ENCODE measurements at regions of chr14 and their contacts with region 1.

Region 1: DNA sequence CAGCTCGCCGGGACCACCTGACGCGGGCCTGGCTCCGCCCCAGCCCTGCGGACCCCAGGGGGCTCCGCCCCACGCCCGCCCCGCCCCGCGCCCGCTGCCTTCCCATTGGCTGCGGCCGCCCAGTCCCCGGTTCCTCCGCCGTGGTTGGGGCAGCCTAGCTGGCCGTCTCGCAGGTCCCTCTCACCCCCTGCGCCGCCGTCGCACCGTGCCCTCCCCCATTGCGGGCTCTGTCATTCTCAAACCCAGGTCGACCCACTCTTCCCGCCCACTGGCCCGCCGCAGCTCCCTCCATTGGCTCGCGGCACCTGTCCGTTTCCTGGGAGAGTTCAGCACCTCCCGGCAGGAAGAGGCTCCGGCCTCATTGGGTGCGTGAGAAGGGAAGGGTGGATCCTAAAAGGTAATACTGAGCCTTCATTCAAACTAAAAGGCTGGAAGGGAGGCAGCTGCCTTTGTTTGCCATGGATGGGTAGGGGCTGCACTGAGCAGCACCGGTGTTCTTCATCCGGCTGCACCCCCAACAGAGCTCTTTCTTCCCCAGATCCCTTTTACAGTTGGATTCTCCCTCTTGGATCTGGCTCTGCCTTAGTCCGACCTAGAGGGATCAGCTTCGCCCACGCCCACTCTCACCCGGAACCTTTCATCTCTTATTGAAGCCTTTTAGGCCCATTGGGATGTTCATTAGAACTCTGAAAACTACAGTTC is 381 bp upstream of the MAP3K9 start:
- DNase-seq: peak; percentile 94
- H3K4me3 ChIP-seq: peak overlapping the region; percentile 77
- H3K27ac ChIP-seq: peak overlapping the region; percentile 28
- H3K4me1 ChIP-seq: peaks cover 35% of the 10 kb centered on the region
- CTCF ChIP-seq: no peak

Region 2: DNA sequence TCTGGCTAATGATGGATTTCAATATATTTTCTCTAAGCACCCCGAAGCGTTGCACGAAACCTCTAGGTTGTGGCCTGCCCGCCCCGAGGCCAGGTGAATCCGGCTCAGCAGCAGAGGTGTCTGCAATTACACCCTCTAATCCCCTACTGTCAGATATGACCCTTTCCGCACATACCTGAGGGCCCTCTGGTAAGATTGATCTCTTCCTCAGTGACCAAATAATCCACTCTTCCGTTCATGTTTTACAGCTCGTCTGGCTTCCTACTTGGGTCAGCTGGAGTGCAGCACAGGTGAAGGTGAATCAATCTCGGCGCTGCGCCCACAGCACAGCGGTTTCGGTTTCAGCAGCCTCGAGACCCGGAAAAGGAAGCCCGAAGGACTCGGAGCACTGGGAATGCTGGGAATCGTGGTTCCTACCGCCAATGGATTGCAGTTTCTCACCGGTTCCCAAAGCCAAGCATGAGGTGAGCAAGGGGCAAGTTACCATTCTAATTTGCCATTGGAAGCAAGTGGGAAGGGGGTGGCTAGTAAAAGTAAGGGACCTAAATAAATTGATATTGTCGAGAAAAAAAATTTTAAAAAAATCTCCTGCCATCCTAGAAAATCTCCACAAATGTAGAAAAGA is 392.9 kb before region 1 on chr14 and contains the start of gene SYNJ2BP:
- CTCF ChIA-PET with region 1: no interaction called
- POLR2A ChIA-PET with region 1: no interaction called
- intact Hi-C with region 1: loop called (anchors 10 kb)
- DNase-seq: peak; percentile 66
- H3K4me3 ChIP-seq: peak within 1 kb of the TSS; percentile 83
- H3K27ac ChIP-seq: no peak within 1 kb of the TSS
- H3K4me1 ChIP-seq: peaks cover 10% of the 10 kb centered on the region
- CTCF ChIP-seq: no peak
- total RNA-seq, gene SYNJ2BP: 6.2 and 6.4 TPM in 2 replicates

Region 3: DNA sequence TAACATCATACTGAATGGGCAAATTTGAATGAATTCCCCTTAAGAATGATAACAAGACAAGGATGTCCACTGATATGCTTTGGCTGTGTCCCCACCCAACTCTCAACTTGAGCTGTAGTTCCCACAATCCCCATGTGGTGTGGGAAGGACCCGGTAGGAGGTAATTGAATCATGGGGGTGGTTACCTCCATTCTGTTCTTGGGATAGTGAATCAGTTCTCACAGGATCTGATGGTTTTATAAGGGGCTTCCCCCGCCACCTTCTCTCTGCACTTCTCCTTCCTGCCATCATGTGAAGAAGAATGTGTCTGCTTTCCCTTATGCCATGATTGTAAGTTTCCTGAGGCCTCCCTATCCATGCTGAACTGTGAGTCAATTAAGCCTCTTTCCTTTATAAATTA is 238.6 kb before region 1 on chr14:
- CTCF ChIA-PET with region 1: no interaction called
- POLR2A ChIA-PET with region 1: no interaction called
- intact Hi-C with region 1: no loop called
- DNase-seq: no peak
- H3K4me3 ChIP-seq: no peak overlapping the region
- H3K27ac ChIP-seq: no peak overlapping the region
- H3K4me1 ChIP-seq: no peaks in the 10 kb centered on the region
- CTCF ChIP-seq: no peak

Region 4: GRCh38 chr14:70972107-70972976 is 162.6 kb after region 1 on chr14:
- CTCF ChIA-PET with region 1: interaction called, 11 read pairs
- POLR2A ChIA-PET with region 1: no interaction called
- intact Hi-C with region 1: no loop called
- DNase-seq: peak; percentile 79
- H3K4me3 ChIP-seq: no peak overlapping the region
- H3K27ac ChIP-seq: no peak overlapping the region
- H3K4me1 ChIP-seq: no peaks in the 10 kb centered on the region
- CTCF ChIP-seq: peak; percentile 97

Measured in OCI-LY7 (cell line).